Astrocyte of the cerebellum (primary cell): ENCODE measurements at regions of chr6 and their contacts with region 1.

Region 1: DNA sequence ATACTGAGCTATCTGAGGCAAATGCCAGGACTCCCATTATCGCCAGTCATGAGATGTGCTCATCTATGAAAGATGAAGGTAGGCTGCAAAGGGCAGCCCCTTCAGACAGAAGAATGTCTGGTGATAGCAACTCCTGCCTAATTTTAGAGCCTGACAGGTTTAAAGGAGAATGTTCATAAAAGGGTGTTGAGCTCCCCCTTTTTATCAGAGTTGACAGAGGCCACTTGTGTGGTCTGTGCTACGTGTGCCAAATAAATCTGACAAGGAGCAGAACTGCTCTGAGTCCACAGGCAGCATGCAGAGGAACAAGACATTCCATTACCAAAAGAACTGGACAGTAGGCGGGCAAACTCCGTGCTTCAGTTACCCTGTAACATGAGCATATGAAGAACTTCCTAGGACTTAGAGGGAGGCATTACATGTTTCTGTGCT is 101.8 kb downstream of the PREP start:
- DNase-seq: no peak
- H3K4me3 ChIP-seq: no peak overlapping the region
- CTCF ChIP-seq: no peak

Region 2: GRCh38 chr6:104940881-104941728 is 360.0 kb before region 1 on chr6:
- in situ Hi-C with region 1: no loop called
- DNase-seq: peak; percentile 3
- H3K4me3 ChIP-seq: peak overlapping the region; percentile 45
- CTCF ChIP-seq: peak; percentile 55

Region 3: GRCh38 chr6:105209950-105210706 is 91.0 kb before region 1 on chr6:
- in situ Hi-C with region 1: loop called (anchors 5 kb)
- DNase-seq: peak; percentile 49
- H3K4me3 ChIP-seq: no peak overlapping the region
- CTCF ChIP-seq: no peak

Region 4: GRCh38 chr6:105263685-105264610 is 37.1 kb before region 1 on chr6:
- in situ Hi-C with region 1: no loop called
- DNase-seq: no peak
- H3K4me3 ChIP-seq: no peak overlapping the region
- CTCF ChIP-seq: no peak

Region 5: GRCh38 chr6:105374010-105374420 is 72.9 kb after region 1 on chr6:
- in situ Hi-C with region 1: no loop called
- DNase-seq: peak; percentile 15
- H3K4me3 ChIP-seq: no peak overlapping the region
- CTCF ChIP-seq: no peak